ENCODE measurements at regions of chrX and their contacts with region 1.

Region 1: GRCh38 chrX:53317365-53318069 is 36.1 kb upstream of the IQSEC2 start:
- DNase-seq: peak; percentile 57 to 77 (median 71)
- H3K4me3 ChIP-seq: no peak overlapping the region
- H3K27ac ChIP-seq: no peak overlapping the region
- H3K4me1 ChIP-seq: no peaks in the 10 kb centered on the region
- H3K27me3 ChIP-seq: no peaks in the 10 kb centered on the region
- CTCF ChIP-seq: peak; percentile 42 to 64 (median 53)
- EP300 ChIP-seq: no peak
- POLR2A ChIP-seq: no peak

Region 2: DNA sequence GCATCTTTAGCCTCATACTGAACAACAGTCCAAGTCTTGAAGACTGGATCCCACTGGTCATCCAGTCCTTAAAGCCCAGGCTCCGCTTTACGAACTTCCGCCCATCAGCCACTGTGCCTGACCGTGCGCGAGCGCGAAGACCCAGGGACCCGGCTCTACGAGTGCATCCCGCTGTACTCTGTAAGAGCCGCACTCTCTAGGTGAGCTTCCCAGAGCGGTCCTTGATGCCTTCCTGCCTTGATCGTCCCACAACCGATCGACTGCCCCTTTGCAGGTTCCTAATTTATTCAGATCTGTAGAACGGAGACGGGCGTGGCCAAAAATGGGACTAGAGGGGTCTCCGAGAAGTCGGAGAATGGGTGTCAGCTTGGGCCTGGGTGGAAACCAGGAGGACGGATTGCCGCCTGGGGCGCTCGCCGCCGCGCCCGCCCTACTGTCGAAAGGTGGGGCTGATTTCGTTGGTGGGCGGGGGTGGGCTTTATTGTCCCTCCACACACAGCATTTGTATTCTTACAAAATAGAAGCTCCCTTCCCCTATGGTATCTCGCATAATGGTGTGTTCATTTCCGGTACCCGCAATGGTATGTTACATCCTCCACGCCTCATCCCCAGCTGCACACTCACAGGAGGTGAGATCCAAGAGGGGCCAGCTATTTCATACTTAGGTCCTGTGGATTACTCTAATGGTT is 316.9 kb before region 1 on chrX:
- intact Hi-C with region 1: loop called in 1 of 4 experiments (anchors 5 kb)
- DNase-seq: no peak
- H3K4me3 ChIP-seq: no peak overlapping the region
- H3K27ac ChIP-seq: no peak overlapping the region
- H3K4me1 ChIP-seq: no peaks in the 10 kb centered on the region
- H3K27me3 ChIP-seq: no peaks in the 10 kb centered on the region
- CTCF ChIP-seq: no peak
- EP300 ChIP-seq: no peak
- POLR2A ChIP-seq: no peak

Region 3: GRCh38 chrX:53433651-53434639 is 116.4 kb after region 1 on chrX and contains the start of gene HSD17B10:
- intact Hi-C with region 1: loop called in 3 of 4 experiments (anchors 5 to 10 kb)
- DNase-seq: peak; percentile 86 to 92 (median 88)
- H3K4me3 ChIP-seq: peak within 1 kb of the TSS; percentile 53
- H3K27ac ChIP-seq: peak within 1 kb of the TSS in 1 of 2 donors; percentile 54
- H3K4me1 ChIP-seq: no peaks in the 10 kb centered on the region
- H3K27me3 ChIP-seq: no peaks in the 10 kb centered on the region
- CTCF ChIP-seq: no peak
- EP300 ChIP-seq: no peak
- POLR2A ChIP-seq: peak; percentile 63
- total RNA-seq, gene HSD17B10: 46.0 to 127 (median 89.5) TPM

Region 4: GRCh38 chrX:53441531-53442321 is 124.2 kb after region 1 on chrX:
- intact Hi-C with region 1: loop called (anchors 5 to 10 kb)
- DNase-seq: peak; percentile 71 to 81 (median 79)
- H3K4me3 ChIP-seq: peak overlapping the region; percentile 27
- H3K27ac ChIP-seq: no peak overlapping the region
- H3K4me1 ChIP-seq: peaks cover 2% of the 10 kb centered on the region
- H3K27me3 ChIP-seq: no peaks in the 10 kb centered on the region
- CTCF ChIP-seq: peak in 1 of 3 donors; percentile 5
- EP300 ChIP-seq: no peak
- POLR2A ChIP-seq: no peak

Measured in ovary (tissue), 10 donors.